Cardiac septum (tissue), 1 donor: ENCODE measurements at regions of chr1 and their contacts with region 1.

Region 1: DNA sequence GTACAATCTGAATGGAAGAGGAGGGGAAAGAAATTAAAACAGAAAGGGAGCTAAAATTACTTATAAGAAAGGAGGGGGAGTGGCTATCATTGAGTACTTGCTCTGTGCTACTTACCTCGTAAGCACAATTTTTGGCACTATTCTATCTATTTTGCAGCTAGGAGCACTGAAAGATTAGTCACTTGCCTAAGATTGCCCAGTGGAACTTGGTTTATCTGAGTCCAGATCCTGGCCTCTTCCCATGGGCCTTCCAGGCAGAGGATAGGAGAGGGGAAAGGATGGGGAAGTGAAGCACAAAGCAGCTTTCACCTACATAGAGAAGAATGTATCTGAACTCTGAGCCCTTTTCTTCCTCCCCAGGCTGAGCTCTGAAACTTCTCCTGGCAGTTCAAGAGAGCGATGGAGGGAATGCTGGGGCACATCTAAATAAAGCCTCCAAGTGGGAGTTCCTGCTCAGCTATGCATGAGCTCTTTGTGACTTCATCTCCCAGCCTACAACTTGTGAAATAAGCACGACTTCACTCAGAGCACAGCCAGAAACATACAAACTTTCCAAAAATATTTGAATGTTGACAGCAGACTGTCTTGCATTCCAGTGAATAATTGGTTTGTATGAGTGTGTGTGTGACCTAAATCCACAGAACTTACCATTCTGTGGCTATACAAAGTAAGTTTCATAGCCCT is 29.4 kb downstream of the HMGB4 start:
- DNase-seq: no peak

Region 2: GRCh38 chr1:33763406-33763805 is 129.9 kb before region 1 on chr1:
- intact Hi-C with region 1: loop called (anchors 10 kb)
- DNase-seq: no peak

Region 3: DNA sequence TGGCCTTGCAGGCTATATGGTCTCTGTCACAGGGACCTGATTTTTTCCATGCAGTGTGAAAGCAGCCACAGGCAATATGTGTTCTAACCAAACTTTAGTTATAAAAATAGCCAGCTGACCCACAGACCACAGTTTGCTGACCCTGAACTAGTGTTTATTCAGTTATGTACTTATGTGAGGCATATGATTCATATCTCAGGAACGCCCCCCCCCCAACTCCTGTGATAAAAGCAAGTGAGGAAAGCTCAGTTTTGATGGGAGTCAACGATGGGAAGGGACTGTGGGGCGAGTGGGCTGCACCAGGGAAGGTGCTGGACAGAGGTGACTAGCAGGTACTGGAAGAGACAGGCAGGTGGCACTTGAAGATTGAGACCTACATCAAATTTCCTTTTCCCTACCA is 50.7 kb after region 1 on chr1:
- intact Hi-C with region 1: no loop called
- DNase-seq: peak; percentile 10

Region 4: GRCh38 chr1:34852677-34853217 is 959.5 kb after region 1 on chr1:
- intact Hi-C with region 1: no loop called
- DNase-seq: peak; percentile 91